CD14-positive monocyte (primary cell): ENCODE measurements at regions of chr5 and their contacts with region 1.

Region 1: DNA sequence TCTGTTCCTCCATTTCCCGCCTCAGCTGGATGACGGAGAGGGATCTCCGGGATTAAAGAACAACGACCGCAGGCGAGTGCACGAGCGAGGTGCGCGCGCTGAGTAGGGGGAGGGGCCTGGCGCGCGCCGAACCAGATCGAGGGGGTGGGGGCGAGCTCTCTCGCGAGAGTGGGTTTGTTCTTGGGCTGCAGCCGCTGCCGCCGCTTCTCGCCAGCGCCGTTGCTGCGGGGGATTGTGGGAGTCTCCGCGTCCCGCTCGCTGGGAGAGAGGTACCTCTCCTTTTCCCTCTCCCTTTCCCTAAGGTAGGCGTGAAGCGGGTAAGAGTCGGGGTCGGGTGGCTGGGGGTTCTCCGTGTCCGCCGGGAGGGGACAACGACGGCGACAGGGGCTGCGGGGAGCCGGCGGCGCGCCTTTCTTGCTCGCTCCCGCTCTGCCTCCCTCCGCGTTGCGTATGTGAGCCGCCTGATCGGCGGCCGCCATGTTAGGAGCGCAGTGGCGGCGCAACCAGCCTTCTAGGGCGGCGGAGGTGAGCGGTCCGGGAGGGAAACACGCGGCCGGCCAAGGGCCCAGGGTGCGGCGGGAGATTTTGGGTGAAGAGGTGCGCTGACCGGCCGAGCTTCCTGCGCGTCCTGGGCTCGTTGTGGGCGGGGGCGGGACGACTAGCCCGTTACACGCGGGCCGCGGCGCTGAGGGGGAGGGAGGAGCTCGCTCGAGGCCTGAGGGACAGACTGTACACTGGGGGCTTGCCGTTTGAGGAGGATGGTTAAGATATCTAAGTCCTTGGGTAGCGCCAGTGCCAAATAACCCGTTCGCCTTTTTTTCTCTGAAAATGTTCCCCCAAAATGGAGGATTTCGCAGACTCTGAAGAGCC is at the start of gene MATR3:
- DNase-seq: peak; percentile 93 to 96 (median 94)
- H3K4me3 ChIP-seq: peak within 1 kb of the TSS; percentile 70 to 93 (median 91)
- H3K4me3 Mint-ChIP-seq: peak within 1 kb of the TSS; percentile 95 to 96
- H3K27ac ChIP-seq: peak within 1 kb of the TSS; percentile 91 to 96
- H3K27ac Mint-ChIP-seq: peak within 1 kb of the TSS; percentile 97 to 99 (median 98)
- H3K4me1 ChIP-seq: peaks cover 18 to 32% of the 10 kb centered on the region in 2 donors
- H3K4me1 Mint-ChIP-seq: peaks cover 39% of the 10 kb centered on the region
- H3K27me3 ChIP-seq: no peaks in the 10 kb centered on the region
- H3K27me3 Mint-ChIP-seq: no peaks in the 10 kb centered on the region
- CTCF ChIP-seq: no peak
- polyA plus RNA-seq, gene MATR3: 61.8 to 174 (median 137) TPM

Region 2: GRCh38 chr5:139273572-139274289 is 20.0 kb before region 1 on chr5:
- intact Hi-C with region 1: loop called in 1 of 2 experiments (anchors 2 kb)
- DNase-seq: peak; percentile 89 to 97 (median 93)
- H3K4me3 ChIP-seq: peak overlapping the region; percentile 55 to 83 (median 67)
- H3K4me3 Mint-ChIP-seq: peak overlapping the region; percentile 84 to 93
- H3K27ac ChIP-seq: peak overlapping the region; percentile 67 to 80
- H3K27ac Mint-ChIP-seq: peak overlapping the region; percentile 85 to 95 (median 89)
- H3K4me1 ChIP-seq: peaks cover 35 to 38% of the 10 kb centered on the region in 2 donors
- H3K4me1 Mint-ChIP-seq: peaks cover 41% of the 10 kb centered on the region
- H3K27me3 ChIP-seq: no peaks in the 10 kb centered on the region
- H3K27me3 Mint-ChIP-seq: peaks cover 0 to 2% (median 0%) of the 10 kb centered on the region in 3 donors
- CTCF ChIP-seq: peak; percentile 19

Region 3: DNA sequence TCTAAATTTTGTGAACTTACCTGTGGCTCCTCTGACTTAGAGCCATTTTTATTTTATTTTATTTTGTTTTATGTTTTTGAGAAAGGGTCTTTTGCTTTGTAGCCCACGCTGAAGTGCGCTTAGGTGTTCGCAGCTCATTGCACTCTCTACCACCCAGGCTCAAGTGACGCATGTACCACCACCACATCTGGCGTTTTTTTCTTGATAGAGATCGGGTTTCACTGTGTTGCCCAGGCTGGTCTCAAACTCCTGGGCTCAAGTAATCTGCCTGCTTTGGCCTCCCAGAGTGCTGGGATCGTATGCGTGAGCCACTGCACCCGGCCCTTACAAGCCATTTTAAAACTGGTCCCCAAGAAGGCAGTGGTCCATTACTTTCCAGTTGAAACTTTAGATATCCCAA is 18.3 kb after region 1 on chr5:
- intact Hi-C with region 1: no loop called
- DNase-seq: no peak
- H3K4me3 ChIP-seq: no peak overlapping the region
- H3K4me3 Mint-ChIP-seq: no peak overlapping the region
- H3K27ac ChIP-seq: no peak overlapping the region
- H3K27ac Mint-ChIP-seq: no peak overlapping the region
- H3K4me1 ChIP-seq: no peaks in the 10 kb centered on the region
- H3K4me1 Mint-ChIP-seq: peaks cover 28% of the 10 kb centered on the region
- H3K27me3 ChIP-seq: no peaks in the 10 kb centered on the region
- H3K27me3 Mint-ChIP-seq: no peaks in the 10 kb centered on the region
- CTCF ChIP-seq: no peak

Region 4: DNA sequence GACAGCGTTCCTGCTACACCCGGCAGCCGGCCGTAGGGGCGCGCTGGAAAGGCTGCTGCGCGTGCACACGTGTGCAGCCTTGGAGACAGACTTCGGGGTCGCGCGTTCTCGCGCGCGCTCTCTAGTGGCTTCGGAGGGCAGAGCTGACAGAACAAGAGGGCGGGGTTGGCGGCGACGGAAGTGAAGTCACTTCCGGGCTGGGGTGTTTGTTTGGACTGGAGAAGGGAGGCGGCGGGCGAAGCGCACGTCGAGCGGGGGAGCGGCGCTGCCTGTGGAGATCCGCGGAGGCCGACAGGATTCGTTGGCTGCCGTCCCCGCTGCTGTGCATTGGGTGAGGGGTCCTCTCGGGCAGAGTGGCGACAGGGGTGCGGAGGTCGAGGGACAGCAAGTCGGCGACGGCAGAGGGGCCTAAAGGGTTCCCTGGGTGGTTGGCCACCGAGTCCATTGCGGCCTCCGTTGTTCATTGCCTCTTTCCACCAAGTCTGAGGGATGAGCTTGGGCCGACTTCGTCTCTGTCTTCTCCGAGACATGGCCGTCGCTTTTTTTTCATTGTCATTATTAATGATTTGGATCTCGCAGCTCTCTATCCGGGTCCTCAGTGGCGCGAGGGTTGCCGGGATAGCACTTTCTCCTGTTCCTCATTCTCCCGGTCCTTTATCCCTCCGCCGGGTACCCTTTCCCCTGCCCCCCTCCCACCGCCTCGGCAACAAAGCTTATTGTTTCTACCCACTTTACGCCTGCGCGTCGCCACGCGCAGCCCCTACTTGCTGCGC is 48.1 kb after region 1 on chr5 and contains the start of gene PAIP2:
- intact Hi-C with region 1: loop called in 1 of 2 experiments (anchors 5 kb)
- DNase-seq: peak; percentile 93 to 97 (median 97)
- H3K4me3 ChIP-seq: peak within 1 kb of the TSS; percentile 74 to 89 (median 87)
- H3K4me3 Mint-ChIP-seq: peak within 1 kb of the TSS; percentile 97 to 99
- H3K27ac ChIP-seq: peak within 1 kb of the TSS; percentile 96 to 99
- H3K27ac Mint-ChIP-seq: peak within 1 kb of the TSS; percentile 94 to 100 (median 99)
- H3K4me1 ChIP-seq: peaks cover 21 to 31% of the 10 kb centered on the region in 2 donors
- H3K4me1 Mint-ChIP-seq: peaks cover 33% of the 10 kb centered on the region
- H3K27me3 ChIP-seq: no peaks in the 10 kb centered on the region
- H3K27me3 Mint-ChIP-seq: peaks cover 5 to 7% (median 6%) of the 10 kb centered on the region in 3 donors
- CTCF ChIP-seq: peak; percentile 65
- polyA plus RNA-seq, gene PAIP2: 68.3 to 325 (median 313) TPM